H1 (cell line): ENCODE measurements at regions of chr9 and their contacts with region 1.

Region 1: DNA sequence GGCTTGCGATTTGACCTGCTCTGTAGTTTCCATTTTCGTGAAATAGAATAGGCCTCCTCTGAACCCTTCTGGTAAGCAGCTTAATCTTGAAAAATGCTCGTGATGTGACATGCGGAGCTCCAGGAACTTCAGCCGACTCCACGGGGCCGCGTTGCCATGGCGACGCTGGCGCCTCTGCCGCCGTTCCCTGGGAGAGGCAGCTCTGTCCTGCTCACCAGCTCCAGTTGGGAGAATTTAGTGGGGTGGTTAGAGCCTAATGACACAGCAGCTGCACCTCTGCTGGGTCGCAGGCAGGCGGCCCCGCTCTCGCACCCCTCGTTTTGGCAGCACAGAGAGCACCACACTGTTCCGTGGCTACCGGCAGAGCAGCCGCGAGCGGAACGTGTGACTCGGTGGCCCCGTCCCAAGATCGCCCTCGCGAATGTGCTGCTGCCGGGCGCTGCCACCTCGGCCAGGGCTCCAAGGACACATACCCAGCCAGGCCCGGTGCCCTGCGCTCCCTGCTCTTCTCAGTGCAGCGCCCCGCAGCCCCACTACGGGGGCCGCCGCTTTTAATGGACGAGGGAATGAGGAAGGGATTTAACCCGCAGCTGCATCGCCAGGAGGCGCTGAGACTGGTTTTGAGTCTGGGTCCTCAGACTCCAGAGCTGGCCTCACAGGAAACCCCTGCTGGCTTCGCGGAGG is 131.2 kb upstream of the LMX1B start:
- DNase-seq: peak; percentile 36 to 79
- H3K4me3 ChIP-seq: peak overlapping the region; percentile 7 to 53 (median 42); a peak in 7 of 8 replicates
- H3K27ac ChIP-seq: no peak overlapping the region
- H3K4me1 ChIP-seq: peaks cover 0 to 4% (median 2%) of the 10 kb centered on the region in 4 experiments; a peak in 3 of 7 replicates
- H3K27me3 ChIP-seq: peaks cover 0 to 5% (median 0%) of the 10 kb centered on the region in 4 experiments; a peak in 3 of 7 replicates
- CTCF ChIP-seq: peak; percentile 38 to 64 (median 52)
- EP300 ChIP-seq: no peak
- POLR2A ChIP-seq: no peak
- RAD21 ChIP-seq: peak in 1 of 2 experiments; percentile 23; a peak in 1 of 4 replicates

Region 2: DNA sequence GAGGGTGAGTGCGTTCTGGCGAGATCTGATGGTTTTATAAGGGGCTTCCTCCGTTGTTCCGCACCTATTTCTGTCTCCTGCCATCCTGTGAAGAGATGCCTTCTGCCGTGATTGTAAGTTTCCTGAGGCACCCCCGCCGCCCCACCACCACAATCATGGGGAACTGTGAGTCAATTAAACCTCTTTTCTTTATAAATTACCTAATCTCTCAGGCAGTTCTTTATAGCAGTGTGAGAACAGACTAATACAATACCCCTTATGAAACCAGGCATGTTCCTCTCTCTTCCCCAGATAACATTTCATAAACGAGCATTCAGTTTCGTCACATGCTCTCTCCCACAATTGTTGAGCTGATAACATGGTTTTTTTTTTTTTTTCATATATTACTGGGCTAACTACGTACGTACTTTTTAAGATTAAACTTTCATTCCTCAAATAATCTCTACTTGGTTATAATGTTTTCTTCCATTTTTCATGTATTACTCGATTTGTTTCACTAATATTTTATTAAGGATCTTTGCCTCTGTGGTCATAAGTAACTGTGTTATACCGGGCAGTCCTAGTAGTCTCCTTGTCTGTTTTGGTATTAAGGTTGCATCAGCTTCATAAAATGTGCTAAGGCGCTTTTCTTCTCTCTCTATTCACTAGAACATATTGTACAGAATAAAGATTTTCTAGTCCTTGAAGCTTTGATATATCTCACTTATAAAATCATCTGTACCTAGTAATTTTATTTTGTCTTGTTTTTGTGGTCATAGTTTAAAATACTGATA is 220.7 kb before region 1 on chr9:
- CTCF ChIA-PET with region 1: no interaction called
- POLR2A ChIA-PET with region 1: no interaction called
- DNase-seq: no peak
- H3K4me3 ChIP-seq: no peak overlapping the region
- H3K27ac ChIP-seq: no peak overlapping the region
- H3K4me1 ChIP-seq: no peaks in the 10 kb centered on the region
- H3K27me3 ChIP-seq: no peaks in the 10 kb centered on the region
- CTCF ChIP-seq: no peak
- EP300 ChIP-seq: no peak
- POLR2A ChIP-seq: no peak
- RAD21 ChIP-seq: no peak

Region 3: DNA sequence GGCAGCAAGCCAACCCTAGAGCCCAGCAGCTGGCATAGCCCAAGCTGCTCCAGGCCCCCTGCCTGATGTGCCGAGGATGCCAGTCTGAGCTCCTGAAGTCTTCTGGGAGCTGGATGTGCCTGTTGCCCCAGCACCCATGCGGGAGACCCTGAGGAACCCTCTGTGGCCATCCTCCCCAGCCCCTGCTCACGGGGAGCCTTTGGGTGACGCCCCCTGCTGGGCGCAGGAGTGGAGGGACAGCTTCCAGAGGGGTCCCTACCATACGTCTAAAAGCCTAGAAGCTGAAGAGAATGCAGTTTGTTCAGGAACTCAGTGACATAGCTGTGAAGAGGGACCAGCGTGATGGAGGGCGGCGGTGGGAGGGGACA is 189.0 kb before region 1 on chr9:
- CTCF ChIA-PET with region 1: interaction called, 12 read pairs
- POLR2A ChIA-PET with region 1: no interaction called
- DNase-seq: no peak
- H3K4me3 ChIP-seq: no peak overlapping the region
- H3K27ac ChIP-seq: no peak overlapping the region
- H3K4me1 ChIP-seq: no peaks in the 10 kb centered on the region
- H3K27me3 ChIP-seq: no peaks in the 10 kb centered on the region; a peak in 1 of 7 replicates
- CTCF ChIP-seq: peak; percentile 28 to 42 (median 35); a peak in 3 of 4 replicates
- EP300 ChIP-seq: no peak
- POLR2A ChIP-seq: no peak
- RAD21 ChIP-seq: peak; percentile 14 to 23; a peak in 1 of 4 replicates

Region 4: DNA sequence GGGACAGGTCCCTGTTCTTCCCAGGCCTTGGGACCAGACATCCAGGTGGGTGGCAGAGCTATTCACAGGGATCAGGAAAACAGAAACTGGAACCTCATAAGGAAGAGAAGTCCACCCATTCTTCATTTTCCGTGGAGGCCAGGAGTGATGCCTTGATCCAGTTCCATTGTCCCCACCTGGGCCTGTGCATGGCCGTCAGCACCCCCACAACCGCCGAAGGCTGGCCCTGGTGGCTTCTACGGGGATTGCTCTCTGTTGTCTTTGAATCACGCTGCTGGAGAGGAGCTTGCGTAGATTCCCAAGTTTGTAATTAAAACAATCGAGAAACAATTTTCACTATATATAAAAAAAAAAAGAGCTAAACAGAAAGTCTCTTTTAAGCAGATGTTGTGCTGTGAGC is 21.5 kb before region 1 on chr9:
- CTCF ChIA-PET with region 1: interaction called, 14 read pairs
- POLR2A ChIA-PET with region 1: no interaction called
- DNase-seq: no peak
- H3K4me3 ChIP-seq: no peak overlapping the region
- H3K27ac ChIP-seq: no peak overlapping the region
- H3K4me1 ChIP-seq: no peaks in the 10 kb centered on the region
- H3K27me3 ChIP-seq: no peaks in the 10 kb centered on the region
- CTCF ChIP-seq: peak in 2 of 3 experiments; percentile 22 to 36; a peak in 2 of 4 replicates
- EP300 ChIP-seq: no peak
- POLR2A ChIP-seq: no peak
- RAD21 ChIP-seq: no peak

Region 5: DNA sequence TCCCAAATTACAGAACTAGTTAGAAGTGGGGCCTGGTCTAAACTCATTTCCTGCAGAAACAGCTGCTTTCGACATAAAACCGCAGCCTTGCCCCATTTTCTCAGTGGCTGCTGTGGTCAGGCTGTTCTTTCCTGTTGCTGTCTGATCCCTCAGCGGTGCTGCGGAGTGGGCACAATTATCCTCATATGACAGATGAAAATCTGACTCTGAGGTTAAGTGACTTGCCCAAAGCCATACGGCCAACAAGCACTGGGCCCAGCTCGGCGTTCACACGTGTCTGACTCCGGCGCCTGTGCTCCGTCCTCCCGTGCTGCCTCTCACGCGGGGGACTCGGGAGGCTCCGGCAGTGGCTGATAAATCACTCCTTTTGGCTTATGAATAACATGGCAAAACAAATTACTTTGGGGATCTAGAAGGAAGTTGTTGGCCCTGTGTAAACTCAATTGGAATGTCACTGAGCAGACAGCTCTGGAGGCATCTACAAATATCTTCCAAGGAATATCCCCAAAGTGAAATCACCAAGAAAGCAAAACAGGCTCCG is 11.3 kb before region 1 on chr9:
- CTCF ChIA-PET with region 1: interaction called, 34 read pairs
- POLR2A ChIA-PET with region 1: interaction called, 5 read pairs
- DNase-seq: no peak
- H3K4me3 ChIP-seq: no peak overlapping the region
- H3K27ac ChIP-seq: no peak overlapping the region
- H3K4me1 ChIP-seq: peaks cover 0 to 13% (median 3%) of the 10 kb centered on the region in 4 experiments; a peak in 3 of 7 replicates
- H3K27me3 ChIP-seq: no peaks in the 10 kb centered on the region
- CTCF ChIP-seq: no peak
- EP300 ChIP-seq: no peak
- POLR2A ChIP-seq: no peak
- RAD21 ChIP-seq: no peak